H1 (cell line): ENCODE measurements at regions of chr10 and their contacts with region 1.

Region 1: DNA sequence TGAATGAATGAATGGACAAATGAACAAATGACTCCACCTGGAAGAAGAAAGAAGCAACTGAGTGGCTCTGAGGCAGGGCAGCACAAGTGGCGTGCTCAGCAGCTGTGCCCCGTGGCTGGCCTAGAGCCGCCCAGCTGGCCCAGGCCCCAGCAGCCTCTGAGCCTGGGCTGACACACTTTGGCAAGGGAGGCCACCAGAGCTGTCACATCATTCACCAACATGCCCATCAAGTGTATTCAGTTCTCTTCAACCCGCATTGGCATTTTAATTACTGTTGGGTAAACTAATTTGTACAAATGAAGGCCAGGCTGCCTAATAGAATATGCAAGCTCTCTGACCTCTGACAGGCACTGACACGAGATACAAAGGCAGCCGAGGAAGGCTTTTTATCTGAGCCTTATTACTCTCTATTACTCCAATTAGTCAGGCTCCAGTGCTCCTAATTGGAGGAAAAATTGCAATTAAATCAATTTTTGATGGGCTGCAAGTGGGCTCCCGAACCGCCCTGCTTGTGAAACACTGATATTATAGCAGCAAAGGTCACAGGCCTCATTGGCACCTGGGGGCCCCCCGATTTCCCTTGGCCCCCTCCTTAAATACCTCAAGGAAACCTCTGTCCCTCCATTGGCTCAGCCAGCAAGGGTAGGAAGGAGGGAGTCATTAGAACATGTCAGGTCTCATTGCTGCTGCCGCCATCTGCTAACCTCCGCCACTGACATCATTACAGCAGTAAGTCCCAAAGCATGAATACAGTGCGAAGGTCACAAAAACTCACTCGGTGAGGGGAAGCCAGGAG is 41.9 kb downstream of the DPCD start:
- DNase-seq: no peak
- H3K4me3 ChIP-seq: no peak overlapping the region
- H3K27ac ChIP-seq: no peak overlapping the region
- H3K4me1 ChIP-seq: no peaks in the 10 kb centered on the region; a peak in 1 of 7 replicates
- H3K27me3 ChIP-seq: no peaks in the 10 kb centered on the region
- CTCF ChIP-seq: no peak
- EP300 ChIP-seq: no peak
- POLR2A ChIP-seq: no peak
- RAD21 ChIP-seq: no peak

Region 2: DNA sequence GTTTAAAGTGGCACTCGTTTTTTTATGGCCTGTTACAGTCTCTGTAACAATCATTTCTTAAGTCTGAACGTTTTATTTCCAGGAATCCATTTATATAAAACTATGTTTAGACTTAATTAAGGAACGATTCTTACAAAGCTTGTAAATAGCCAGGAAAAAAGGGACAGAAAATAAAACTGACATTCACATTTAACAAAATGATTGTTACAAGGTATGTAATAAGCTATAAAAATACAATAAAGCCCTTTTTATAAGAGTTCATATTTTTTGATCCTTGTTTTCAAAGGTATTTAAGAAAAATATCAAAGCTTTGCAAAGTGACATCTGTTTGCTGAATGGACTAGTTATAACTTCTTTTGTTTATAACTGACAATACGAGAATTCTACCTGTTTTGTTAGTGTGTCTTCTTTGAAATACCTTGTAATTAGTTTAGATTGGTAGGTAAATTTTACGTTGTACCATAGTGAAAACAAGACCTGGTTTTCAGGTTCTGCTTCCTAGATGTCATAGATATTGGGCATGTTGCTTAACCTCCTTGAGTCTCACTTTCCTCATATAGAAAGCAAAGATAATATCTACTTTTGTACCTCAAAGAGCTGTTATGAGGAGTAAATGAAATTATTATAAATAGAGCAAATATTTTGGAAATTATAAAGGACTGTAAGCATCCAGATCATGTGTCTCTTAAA is 250.2 kb before region 1 on chr10:
- CTCF ChIA-PET with region 1: no interaction called
- POLR2A ChIA-PET with region 1: no interaction called
- DNase-seq: no peak
- H3K4me3 ChIP-seq: no peak overlapping the region
- H3K27ac ChIP-seq: no peak overlapping the region
- H3K4me1 ChIP-seq: no peaks in the 10 kb centered on the region
- H3K27me3 ChIP-seq: no peaks in the 10 kb centered on the region
- CTCF ChIP-seq: no peak
- EP300 ChIP-seq: no peak
- POLR2A ChIP-seq: no peak
- RAD21 ChIP-seq: no peak

Region 3: GRCh38 chr10:101617102-101617823 is 12.8 kb before region 1 on chr10:
- CTCF ChIA-PET with region 1: interaction called, 25 read pairs
- POLR2A ChIA-PET with region 1: interaction called, 4 read pairs
- DNase-seq: no peak
- H3K4me3 ChIP-seq: no peak overlapping the region
- H3K27ac ChIP-seq: no peak overlapping the region
- H3K4me1 ChIP-seq: peaks cover 5 to 17% (median 13%) of the 10 kb centered on the region in 4 experiments
- H3K27me3 ChIP-seq: no peaks in the 10 kb centered on the region
- CTCF ChIP-seq: peak; percentile 21 to 50 (median 37)
- EP300 ChIP-seq: no peak
- POLR2A ChIP-seq: no peak
- RAD21 ChIP-seq: peak; percentile 26 to 46; a peak in 3 of 4 replicates

Region 4: GRCh38 chr10:101724446-101724845 is 94.4 kb after region 1 on chr10:
- CTCF ChIA-PET with region 1: no interaction called
- POLR2A ChIA-PET with region 1: no interaction called
- DNase-seq: no peak
- H3K4me3 ChIP-seq: no peak overlapping the region
- H3K27ac ChIP-seq: no peak overlapping the region
- H3K4me1 ChIP-seq: peaks cover 0 to 3% (median 0%) of the 10 kb centered on the region in 4 experiments; a peak in 2 of 7 replicates
- H3K27me3 ChIP-seq: no peaks in the 10 kb centered on the region
- CTCF ChIP-seq: no peak
- EP300 ChIP-seq: no peak
- POLR2A ChIP-seq: no peak
- RAD21 ChIP-seq: no peak